ENCODE measurements at regions of chr6 and their contacts with region 1.

Region 1: DNA sequence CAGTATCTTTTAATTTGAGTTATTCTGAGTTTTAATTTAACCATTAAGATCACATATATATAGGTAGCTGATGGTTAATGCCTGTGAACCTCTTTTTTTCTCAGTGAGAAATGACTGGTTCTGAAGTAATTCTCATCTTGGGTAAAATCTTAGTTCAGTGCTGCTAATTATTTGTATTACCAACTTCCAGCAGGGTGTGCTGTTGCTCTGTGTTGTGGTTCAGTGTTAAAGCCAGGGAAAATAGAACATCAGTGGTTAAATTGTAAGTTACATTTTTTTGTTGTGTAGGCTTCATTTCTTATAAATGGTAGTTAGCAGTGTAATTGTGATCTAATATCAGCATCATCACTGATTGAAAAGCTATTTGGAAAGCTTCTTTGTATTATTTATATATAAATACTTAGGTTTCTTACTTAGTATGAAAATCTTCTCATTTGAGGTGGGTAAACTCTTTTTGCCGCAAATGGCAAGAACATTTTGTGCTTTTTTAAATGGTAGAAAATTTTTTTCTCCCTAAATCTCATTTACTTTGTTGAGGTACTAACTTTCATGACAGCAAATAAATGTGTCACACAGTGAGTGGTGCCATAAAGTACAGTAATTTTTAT is 43.7 kb downstream of the CDC5L start:
- DNase-seq: peak; percentile 43
- H3K4me3 ChIP-seq: no peak overlapping the region
- H3K27ac ChIP-seq: no peak overlapping the region
- H3K27me3 ChIP-seq: no peaks in the 10 kb centered on the region
- CTCF ChIP-seq: peak; percentile 79

Region 2: DNA sequence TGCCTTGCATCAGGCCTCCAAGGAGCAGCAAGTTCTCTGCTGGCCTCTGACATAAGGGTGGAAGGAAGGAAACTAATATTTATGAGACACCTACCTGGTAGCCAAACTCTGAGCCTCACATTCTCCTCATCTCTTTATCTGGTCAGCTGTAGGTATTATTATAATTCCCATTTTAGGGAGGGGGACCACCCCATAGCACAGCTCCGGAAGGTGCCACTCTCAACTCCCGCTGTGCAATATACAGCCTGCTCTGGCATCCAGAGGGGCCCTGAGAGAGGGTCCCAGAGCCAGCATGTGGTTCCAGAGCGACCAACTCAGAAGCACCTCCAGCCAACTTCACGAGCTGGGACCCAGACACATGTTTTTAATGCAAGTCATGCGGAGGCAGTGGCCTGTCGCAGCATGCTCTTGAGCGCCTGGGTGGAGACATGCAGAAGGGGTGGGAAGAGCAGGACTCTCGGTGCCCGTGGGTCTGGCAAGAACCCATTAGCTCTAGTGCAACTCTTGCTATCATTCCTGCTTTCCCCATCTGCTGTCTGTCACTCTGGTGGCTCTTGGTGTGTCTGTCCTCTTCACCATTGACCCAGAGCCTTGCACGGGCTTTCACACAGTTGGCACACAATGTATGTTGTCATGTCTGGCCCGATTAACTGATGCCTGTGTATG is 229.5 kb before region 1 on chr6:
- CTCF ChIA-PET with region 1: no interaction called
- POLR2A ChIA-PET with region 1: no interaction called
- DNase-seq: no peak
- H3K4me3 ChIP-seq: no peak overlapping the region
- H3K27ac ChIP-seq: no peak overlapping the region
- H3K27me3 ChIP-seq: peaks cover 11% of the 10 kb centered on the region
- CTCF ChIP-seq: no peak

Region 3: DNA sequence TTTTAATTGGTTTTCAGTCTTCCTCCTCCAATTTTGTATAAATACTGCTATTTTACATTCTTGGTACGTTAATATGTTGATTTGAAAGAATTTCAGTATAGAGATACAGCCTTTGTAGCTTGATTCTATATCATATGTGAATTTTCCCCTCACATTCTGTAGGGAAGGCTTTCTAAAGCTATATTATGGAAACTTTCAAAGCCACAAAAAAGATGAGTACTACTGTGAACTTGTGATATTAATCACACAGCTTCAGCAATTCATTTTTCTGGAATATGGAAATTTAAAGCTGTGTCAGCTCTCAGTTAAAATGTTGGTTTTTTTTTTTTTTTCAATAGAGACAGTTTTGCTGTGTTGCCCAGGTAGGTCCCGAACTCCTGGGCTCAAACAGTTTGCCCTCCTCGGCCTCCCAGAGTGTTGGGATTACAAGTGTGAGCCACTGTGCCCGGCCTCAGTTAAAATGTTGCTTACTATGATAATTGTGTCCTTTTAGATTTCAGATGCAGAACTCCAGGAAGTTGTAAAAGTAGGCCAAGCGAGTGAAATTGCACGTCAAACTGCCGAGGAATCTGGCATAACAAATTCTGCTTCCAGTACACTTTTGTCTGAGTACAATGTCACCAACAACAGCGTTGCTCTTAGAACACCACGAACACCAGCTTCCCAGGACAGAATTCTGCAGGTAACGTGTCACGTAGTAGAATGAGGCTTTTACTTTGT is 23.1 kb before region 1 on chr6:
- CTCF ChIA-PET with region 1: interaction called, 10 read pairs
- POLR2A ChIA-PET with region 1: no interaction called
- DNase-seq: no peak
- H3K4me3 ChIP-seq: no peak overlapping the region
- H3K27ac ChIP-seq: no peak overlapping the region
- H3K27me3 ChIP-seq: no peaks in the 10 kb centered on the region
- CTCF ChIP-seq: no peak

Region 4: DNA sequence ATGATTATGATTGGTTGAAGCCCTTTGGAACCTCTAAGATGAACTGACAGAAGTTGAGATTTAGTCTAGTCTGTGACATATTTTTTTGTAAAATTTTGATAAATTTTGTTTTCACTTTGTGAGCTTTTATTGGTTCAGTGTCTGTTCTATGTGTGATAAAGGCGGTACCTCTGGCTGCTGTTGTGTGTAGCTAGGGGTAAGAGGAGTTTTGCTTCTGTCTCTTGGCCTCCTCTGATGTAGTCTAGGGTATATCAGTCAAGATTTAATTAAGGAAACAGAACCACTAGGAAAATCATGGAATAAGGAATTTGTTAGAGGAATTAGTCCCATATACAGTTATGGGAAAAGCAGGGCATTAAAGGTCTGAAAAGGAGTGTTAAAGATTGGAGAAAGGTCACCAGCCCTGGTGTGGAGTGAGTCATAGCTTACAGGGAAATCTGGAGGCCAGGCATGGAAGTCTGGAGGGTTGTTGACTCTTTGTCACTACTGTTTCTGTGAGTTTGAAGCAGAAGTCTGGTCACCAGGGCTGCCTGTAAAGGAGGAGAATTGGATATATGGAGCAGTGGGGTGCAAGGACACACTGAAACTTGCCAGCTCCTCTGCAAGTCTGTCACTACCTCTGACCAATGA is 15.2 kb before region 1 on chr6:
- CTCF ChIA-PET with region 1: interaction called, 11 read pairs
- POLR2A ChIA-PET with region 1: no interaction called
- DNase-seq: peak; percentile 2
- H3K4me3 ChIP-seq: no peak overlapping the region
- H3K27ac ChIP-seq: peak overlapping the region; percentile 34
- H3K27me3 ChIP-seq: no peaks in the 10 kb centered on the region
- CTCF ChIP-seq: no peak

Region 5: GRCh38 chr6:44446628-44447306 is 15.5 kb after region 1 on chr6:
- CTCF ChIA-PET with region 1: interaction called, 190 read pairs
- POLR2A ChIA-PET with region 1: no interaction called
- DNase-seq: peak; percentile 34
- H3K4me3 ChIP-seq: no peak overlapping the region
- H3K27ac ChIP-seq: no peak overlapping the region
- H3K27me3 ChIP-seq: no peaks in the 10 kb centered on the region
- CTCF ChIP-seq: no peak

Region 6: DNA sequence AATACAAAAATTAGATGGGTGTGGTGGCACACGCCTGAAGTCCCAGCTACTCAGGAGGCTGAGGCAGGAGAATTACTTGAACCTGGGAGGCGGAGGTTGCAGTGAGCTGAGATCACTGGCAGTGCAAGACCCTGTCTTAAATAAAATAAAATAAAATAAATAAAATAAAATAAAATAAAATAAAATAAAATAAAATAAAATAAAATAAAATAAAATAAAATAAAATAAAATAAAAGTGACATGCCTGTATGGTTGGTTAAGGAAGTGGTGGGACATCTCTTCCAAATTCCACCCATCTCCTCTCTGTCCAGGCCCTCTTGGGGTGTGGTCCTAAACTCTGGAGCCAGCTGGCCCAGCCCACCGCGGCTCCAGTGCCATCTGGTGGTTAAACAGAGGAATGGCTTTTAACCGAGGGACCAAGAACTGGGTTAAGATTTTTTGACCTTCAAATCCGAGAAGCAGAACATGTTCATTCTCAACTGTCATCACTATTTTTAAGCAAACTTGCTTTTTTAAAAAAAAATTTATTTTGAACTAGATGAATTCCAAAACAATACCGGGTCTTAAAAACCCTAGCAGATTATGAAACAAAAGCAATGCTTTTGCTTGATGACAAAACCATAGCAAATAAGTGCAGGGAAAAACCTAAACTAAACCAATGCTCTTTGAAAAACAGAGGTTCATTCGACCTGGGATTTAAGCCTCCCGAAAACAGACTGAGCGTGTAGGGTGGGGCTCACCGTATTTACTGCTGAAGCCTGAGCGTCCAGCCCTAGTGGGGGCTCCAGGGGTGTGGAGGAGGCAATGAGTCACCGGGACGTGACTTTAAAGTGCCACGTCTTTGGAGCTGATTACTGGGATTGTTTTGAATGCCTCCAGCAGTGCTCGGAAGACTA is 25.1 kb after region 1 on chr6:
- CTCF ChIA-PET with region 1: interaction called, 190 read pairs
- POLR2A ChIA-PET with region 1: no interaction called
- DNase-seq: no peak
- H3K4me3 ChIP-seq: no peak overlapping the region
- H3K27ac ChIP-seq: no peak overlapping the region
- H3K27me3 ChIP-seq: no peaks in the 10 kb centered on the region
- CTCF ChIP-seq: peak; percentile 93

Region 7: DNA sequence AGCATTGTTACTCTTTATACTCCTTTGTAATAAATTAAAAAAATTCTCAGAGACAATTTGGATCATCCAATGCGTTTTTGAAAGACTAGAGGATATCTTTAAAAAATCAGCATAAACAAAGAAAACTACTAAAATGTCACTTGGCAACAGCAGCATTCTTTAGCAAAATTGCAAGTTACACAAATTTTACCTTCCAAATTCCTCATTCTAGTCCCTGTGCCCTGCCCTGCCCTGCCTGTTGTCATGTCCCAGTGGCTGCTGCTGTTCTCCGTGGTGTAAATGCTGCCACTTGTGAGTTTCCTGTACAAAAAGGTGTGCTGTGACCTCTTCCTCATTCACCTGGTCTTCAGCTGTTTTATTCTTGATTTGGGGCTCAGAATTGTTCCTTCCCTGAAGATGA is 39.5 kb after region 1 on chr6:
- CTCF ChIA-PET with region 1: interaction called, 15 read pairs
- POLR2A ChIA-PET with region 1: no interaction called
- DNase-seq: no peak
- H3K4me3 ChIP-seq: no peak overlapping the region
- H3K27ac ChIP-seq: no peak overlapping the region
- H3K27me3 ChIP-seq: peaks cover 5% of the 10 kb centered on the region
- CTCF ChIP-seq: no peak

Region 8: GRCh38 chr6:44556046-44556445 is 124.8 kb after region 1 on chr6:
- CTCF ChIA-PET with region 1: no interaction called
- POLR2A ChIA-PET with region 1: no interaction called
- DNase-seq: no peak
- H3K4me3 ChIP-seq: no peak overlapping the region
- H3K27ac ChIP-seq: no peak overlapping the region
- H3K27me3 ChIP-seq: peaks cover 45% of the 10 kb centered on the region
- CTCF ChIP-seq: no peak

Measured in AG04450 (cell line).